Kidney (tissue), 22 donors: ENCODE measurements at regions of chr2 and their contacts with region 1.

Region 1: GRCh38 chr2:74488644-74489481 is 6.0 kb downstream of the TTC31 start:
- DNase-seq: no peak
- H3K4me3 ChIP-seq: no peak overlapping the region
- H3K27ac ChIP-seq: no peak overlapping the region
- H3K4me1 ChIP-seq: no peaks in the 10 kb centered on the region
- H3K27me3 ChIP-seq: no peaks in the 10 kb centered on the region
- CTCF ChIP-seq: no peak

Region 2: GRCh38 chr2:74587664-74588277 is 98.9 kb after region 1 on chr2:
- intact Hi-C with region 1: loop called (anchors 5 kb)
- DNase-seq: peak in 4 of 5 donors; percentile 73 to 89 (median 78)
- H3K4me3 ChIP-seq: no peak overlapping the region
- H3K27ac ChIP-seq: no peak overlapping the region
- H3K4me1 ChIP-seq: peaks cover 0 to 2% (median 0%) of the 10 kb centered on the region in 3 donors
- H3K27me3 ChIP-seq: no peaks in the 10 kb centered on the region
- CTCF ChIP-seq: peak; percentile 69

Region 3: GRCh38 chr2:74632209-74632938 is 143.5 kb after region 1 on chr2:
- intact Hi-C with region 1: no loop called
- DNase-seq: no peak
- H3K4me3 ChIP-seq: no peak overlapping the region
- H3K27ac ChIP-seq: no peak overlapping the region
- H3K4me1 ChIP-seq: peaks cover 0 to 3% (median 0%) of the 10 kb centered on the region in 3 donors
- H3K27me3 ChIP-seq: no peaks in the 10 kb centered on the region
- CTCF ChIP-seq: no peak